Ovary (tissue), 10 donors: ENCODE measurements at regions of chr7 and their contacts with region 1.

Region 1: DNA sequence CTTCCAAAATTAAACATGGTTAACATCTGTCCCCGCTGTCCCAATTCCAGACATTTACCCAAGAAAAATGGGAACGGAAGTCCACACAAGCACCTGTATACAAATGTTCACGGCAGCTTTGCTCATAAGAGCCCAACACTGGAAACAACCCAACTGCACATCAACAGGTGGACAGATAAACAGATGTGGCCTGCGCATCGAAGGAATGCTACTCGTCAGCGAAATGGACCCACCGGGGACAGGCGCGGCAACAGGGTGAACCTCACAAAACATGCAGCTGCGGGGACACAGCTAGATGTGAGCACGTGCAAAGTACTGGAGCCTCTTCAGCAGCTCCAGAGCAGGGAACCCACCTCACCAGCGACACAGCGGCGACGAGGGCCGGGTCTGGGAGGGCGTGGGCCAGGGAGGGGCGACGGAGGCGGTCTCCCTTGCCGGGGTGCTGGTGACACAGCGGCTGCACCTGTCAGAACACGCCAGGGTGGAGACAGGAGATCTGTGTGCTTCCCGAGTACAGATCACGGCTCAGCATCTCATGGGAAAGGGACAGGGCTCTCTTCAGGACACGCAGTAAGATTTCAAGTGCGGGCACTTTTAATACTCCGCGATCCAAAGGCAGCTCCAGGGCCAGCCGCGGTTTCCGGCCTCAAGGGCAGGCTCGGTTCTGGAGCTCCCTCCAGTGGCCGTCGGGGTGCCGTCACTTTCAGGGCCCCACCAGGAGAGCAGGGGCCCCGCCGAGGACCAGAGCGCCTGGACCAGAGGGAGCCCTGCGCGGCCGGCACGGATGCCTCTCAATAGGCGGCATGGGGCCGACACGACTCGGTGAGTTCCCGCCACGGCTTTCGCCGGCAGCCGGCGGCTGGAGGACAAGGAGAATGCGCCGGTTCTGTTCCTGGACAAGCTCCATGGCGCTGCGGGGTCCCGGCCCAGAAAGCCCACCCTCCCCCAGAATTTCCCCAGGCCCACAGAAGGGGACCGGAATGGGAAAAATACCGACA is 21.2 kb downstream of the GPR146 start:
- DNase-seq: peak; percentile 78 to 90 (median 87)
- H3K4me3 ChIP-seq: no peak overlapping the region
- H3K27ac ChIP-seq: no peak overlapping the region
- H3K4me1 ChIP-seq: peaks cover 3% of the 10 kb centered on the region
- H3K27me3 ChIP-seq: no peaks in the 10 kb centered on the region
- CTCF ChIP-seq: peak; percentile 85 to 99 (median 96)
- EP300 ChIP-seq: no peak
- POLR2A ChIP-seq: no peak

Region 2: GRCh38 chr7:909358-910329 is 155.9 kb before region 1 on chr7:
- intact Hi-C with region 1: loop called in 1 of 4 experiments (anchors 10 kb)
- DNase-seq: peak in 3 of 5 donors; percentile 56 to 73 (median 62)
- H3K4me3 ChIP-seq: peak overlapping the region; percentile 7
- H3K27ac ChIP-seq: no peak overlapping the region
- H3K4me1 ChIP-seq: peaks cover 10% of the 10 kb centered on the region
- H3K27me3 ChIP-seq: no peaks in the 10 kb centered on the region
- CTCF ChIP-seq: no peak
- EP300 ChIP-seq: no peak
- POLR2A ChIP-seq: no peak

Region 3: DNA sequence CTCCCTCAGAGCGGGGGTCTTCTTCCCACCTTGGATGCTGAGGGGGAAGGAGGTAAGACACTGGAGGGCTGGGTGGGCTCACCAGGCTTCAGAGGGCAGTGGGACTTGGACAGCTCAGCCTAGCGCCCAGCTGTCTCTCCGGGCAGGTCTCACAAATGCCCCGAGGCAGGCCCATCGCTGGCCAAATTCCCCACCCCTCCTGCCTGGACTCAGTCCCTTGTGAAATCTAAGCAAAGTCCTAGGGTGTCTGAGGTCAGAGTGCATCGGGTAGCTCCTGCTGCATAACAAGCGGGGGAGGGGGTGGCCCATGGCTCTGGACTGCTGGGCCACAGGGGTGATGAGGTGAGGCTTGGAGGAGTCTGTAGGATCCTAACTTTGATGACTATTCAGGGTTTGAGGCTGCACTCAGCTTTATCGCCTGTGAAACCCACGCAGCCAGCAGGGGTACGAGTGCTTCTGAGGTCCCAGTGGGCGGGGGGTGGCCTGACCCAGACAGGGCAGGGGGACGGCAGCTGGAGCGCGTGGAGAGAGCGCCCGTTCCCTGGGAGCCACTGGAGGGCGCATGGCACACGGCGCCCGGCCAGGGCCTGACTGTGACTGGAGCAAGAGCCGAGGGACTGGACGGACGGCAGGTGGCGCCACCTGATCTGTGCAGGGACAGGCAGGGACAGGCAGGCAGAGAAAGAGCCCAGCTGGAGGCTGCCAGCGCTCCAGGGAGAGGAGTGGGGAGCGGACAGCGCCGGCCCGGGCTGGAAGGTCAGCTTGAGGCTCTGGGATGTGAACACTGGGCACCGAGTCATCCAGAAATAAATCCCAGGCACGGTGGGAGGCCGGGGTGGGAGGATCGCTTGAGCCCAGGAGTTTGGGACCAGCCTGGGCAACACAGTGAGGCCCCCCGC is 72.6 kb before region 1 on chr7:
- intact Hi-C with region 1: loop called (anchors 1 to 5 kb)
- DNase-seq: peak; percentile 97 to 99 (median 98)
- H3K4me3 ChIP-seq: no peak overlapping the region
- H3K27ac ChIP-seq: no peak overlapping the region
- H3K4me1 ChIP-seq: peaks cover 14% of the 10 kb centered on the region
- H3K27me3 ChIP-seq: no peaks in the 10 kb centered on the region
- CTCF ChIP-seq: peak; percentile 99 to 100 (median 100)
- EP300 ChIP-seq: no peak
- POLR2A ChIP-seq: peak; percentile 35